ENCODE measurements at regions of chr1 and their contacts with region 1.

Region 1: GRCh38 chr1:236534151-236534651 is 10.4 kb downstream of the LGALS8 start:
- DNase-seq: peak; percentile 57
- H3K4me3 Mint-ChIP-seq: peak overlapping the region; percentile 22
- H3K27ac Mint-ChIP-seq: peak overlapping the region; percentile 81
- H3K4me1 Mint-ChIP-seq: peaks cover 53% of the 10 kb centered on the region
- H3K27me3 Mint-ChIP-seq: no peaks in the 10 kb centered on the region

Region 2: DNA sequence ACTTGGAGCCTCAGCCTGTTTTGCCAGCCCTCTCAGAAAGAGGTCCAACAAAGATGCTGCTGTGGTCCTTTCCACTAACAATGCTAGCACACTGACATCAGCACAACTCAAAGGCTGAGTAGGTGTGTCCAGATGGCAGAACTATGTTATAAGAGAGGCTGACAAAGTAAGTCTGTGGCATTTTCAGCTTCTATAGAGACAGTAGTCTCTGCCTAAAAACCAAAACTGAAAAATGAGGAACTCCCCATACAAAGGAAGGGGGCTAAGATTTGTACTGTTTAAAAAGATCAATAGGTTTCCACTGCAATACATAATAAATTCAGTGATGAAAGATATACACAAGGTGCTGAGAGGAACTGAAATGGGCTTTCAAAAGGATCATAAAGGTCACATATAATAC is 264.8 kb before region 1 on chr1:
- CTCF ChIA-PET with region 1: no interaction called
- POLR2A ChIA-PET with region 1: no interaction called
- DNase-seq: no peak
- H3K4me3 Mint-ChIP-seq: no peak overlapping the region
- H3K27ac Mint-ChIP-seq: no peak overlapping the region
- H3K4me1 Mint-ChIP-seq: no peaks in the 10 kb centered on the region
- H3K27me3 Mint-ChIP-seq: no peaks in the 10 kb centered on the region

Region 3: DNA sequence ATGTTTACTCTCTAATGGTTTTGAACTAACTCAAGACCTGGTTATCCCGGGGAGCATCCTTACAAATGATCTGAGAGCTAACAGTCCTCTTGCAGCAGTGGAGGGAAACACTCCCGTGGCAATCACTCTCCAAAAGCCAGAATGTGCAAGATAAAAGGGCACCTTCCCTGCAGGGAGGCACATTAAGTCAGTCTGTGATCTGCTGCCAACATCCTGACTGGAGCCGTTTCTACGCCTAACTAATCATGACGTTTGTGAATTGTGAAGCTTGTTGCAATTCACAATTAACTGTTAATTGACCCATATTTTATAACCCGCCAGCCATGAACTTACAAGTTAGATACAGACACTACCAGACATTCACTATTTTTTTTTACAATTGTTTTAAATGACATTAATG is 62.5 kb before region 1 on chr1:
- CTCF ChIA-PET with region 1: no interaction called
- POLR2A ChIA-PET with region 1: no interaction called
- DNase-seq: no peak
- H3K4me3 Mint-ChIP-seq: no peak overlapping the region
- H3K27ac Mint-ChIP-seq: no peak overlapping the region
- H3K4me1 Mint-ChIP-seq: no peaks in the 10 kb centered on the region
- H3K27me3 Mint-ChIP-seq: no peaks in the 10 kb centered on the region

Region 4: DNA sequence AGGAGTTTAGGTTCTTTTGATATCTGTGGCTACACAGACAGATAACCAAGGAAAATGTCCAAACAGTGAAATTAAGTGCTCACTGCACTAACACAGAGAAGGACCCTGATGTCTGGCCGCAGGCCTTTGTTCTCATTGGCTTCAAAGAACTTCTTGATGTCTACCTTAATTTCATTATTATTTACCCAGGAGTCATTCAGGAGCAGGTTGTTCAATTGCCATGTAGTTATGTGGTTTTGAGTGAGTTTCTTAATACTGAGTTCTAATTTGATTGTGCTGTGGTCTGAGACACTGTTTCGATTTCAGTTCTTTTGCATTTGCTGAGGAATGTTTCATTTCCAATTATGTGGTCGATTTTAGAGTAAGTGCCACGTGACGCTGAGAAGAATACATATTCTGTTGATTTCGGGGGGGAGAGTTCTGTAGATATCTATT is 25.6 kb before region 1 on chr1:
- CTCF ChIA-PET with region 1: no interaction called
- POLR2A ChIA-PET with region 1: interaction called, 11 read pairs
- DNase-seq: no peak
- H3K4me3 Mint-ChIP-seq: peak overlapping the region; percentile 25
- H3K27ac Mint-ChIP-seq: peak overlapping the region; percentile 72
- H3K4me1 Mint-ChIP-seq: peaks cover 46% of the 10 kb centered on the region
- H3K27me3 Mint-ChIP-seq: peaks cover 6% of the 10 kb centered on the region

Region 5: GRCh38 chr1:236523701-236524141 is 10.5 kb before region 1 on chr1 and contains the start of gene LGALS8:
- CTCF ChIA-PET with region 1: interaction called, 4 read pairs
- POLR2A ChIA-PET with region 1: interaction called, 18 read pairs
- DNase-seq: peak; percentile 90
- H3K4me3 Mint-ChIP-seq: peak within 1 kb of the TSS; percentile 88
- H3K27ac Mint-ChIP-seq: peak within 1 kb of the TSS; percentile 98
- H3K4me1 Mint-ChIP-seq: peaks cover 41% of the 10 kb centered on the region
- H3K27me3 Mint-ChIP-seq: peaks cover 2% of the 10 kb centered on the region
- total RNA-seq, gene LGALS8: 145 to 146 TPM

Measured in activated CD4-positive, alpha-beta memory T cell treated with anti-CD3 and anti-CD28 coated beads, Interleukin-2, amount 10 ng/mL, durations not matched to agents 7 days and 5 days (primary cell).